Activated T-helper 1 cell treated with anti-CD3 and anti-CD28 coated beads, Interleukin-12 subunit alpha, Interleukin-12 subunit beta, Interleukin-2, Interleukin-4 antibody, amounts not matched to agents 30 ng/mL and 10 ng/mL and 1 ng/mL, durations not matched to agents 14 hours and 24 hours and 36 hours (primary cell): ENCODE measurements at regions of chr3 and their contacts with region 1.

Region 1: GRCh38 chr3:120348981-120349818 is at the start of gene LRRC58:
- DNase-seq: peak; percentile 87
- H3K4me3 Mint-ChIP-seq: peak within 1 kb of the TSS; percentile 92
- H3K27ac Mint-ChIP-seq: peak within 1 kb of the TSS; percentile 88
- H3K4me1 Mint-ChIP-seq: peaks cover 46% of the 10 kb centered on the region
- H3K27me3 Mint-ChIP-seq: peaks cover 26% of the 10 kb centered on the region
- total RNA-seq, gene LRRC58: 26.9 and 27.4 TPM in 2 replicates

Region 2: DNA sequence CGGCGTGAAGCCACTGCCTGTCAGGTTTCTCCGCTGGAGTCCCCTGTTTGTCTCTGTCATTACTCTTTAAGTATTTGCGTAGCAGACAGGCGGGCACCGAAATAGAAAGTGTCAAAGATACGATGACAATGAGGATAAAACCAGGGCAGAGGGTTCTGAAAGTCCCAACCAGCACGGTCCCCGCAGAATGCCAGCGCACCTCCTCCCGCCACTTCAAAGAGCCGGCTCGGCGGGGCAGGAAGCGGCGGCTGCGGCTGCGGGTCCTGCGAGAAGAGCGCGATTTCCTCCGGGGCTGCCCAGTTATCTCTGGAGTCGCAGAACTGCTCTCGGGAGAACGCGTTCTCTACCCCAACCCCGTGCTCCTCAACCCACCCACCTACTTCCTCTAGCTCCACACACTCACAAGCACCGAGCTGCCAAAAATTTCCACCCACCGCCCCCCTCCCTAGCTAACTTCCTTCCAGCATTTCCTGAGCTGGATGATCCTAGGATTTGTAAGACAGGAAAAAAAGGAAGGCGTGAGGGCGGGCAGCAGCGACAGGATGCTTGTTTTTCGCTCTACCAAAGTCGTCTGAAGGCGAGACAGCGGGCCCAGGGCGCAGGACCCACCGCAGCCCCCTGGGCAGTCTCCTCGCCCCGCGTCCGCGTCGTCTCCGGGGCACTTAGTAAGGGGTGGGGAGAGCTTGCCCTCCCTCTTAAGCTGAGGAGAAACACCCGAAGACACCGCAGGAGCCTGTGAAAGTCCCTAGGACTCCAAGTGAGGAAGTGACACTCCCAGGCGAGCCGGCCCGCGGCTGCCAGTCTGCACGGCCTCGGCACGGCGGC is 1055.1 kb before region 1 on chr3 and contains the start of gene ARHGAP31:
- intact Hi-C with region 1: loop called (anchors 5 kb)
- DNase-seq: peak; percentile 82
- H3K4me3 Mint-ChIP-seq: peak within 1 kb of the TSS; percentile 85
- H3K27ac Mint-ChIP-seq: peak within 1 kb of the TSS; percentile 78
- H3K4me1 Mint-ChIP-seq: peaks cover 55% of the 10 kb centered on the region
- H3K27me3 Mint-ChIP-seq: peaks cover 42% of the 10 kb centered on the region
- total RNA-seq, gene ARHGAP31: 7.5 and 8.0 TPM in 2 replicates

Region 3: GRCh38 chr3:119508172-119508845 is 840.9 kb before region 1 on chr3:
- intact Hi-C with region 1: loop called (anchors 5 kb)
- DNase-seq: peak; percentile 31
- H3K4me3 Mint-ChIP-seq: peak overlapping the region; percentile 5
- H3K27ac Mint-ChIP-seq: peak overlapping the region; percentile 89
- H3K4me1 Mint-ChIP-seq: peaks cover 39% of the 10 kb centered on the region
- H3K27me3 Mint-ChIP-seq: no peaks in the 10 kb centered on the region

Region 4: GRCh38 chr3:119891944-119892721 is 457.1 kb before region 1 on chr3:
- intact Hi-C with region 1: loop called (anchors 5 kb)
- DNase-seq: peak; percentile 35
- H3K4me3 Mint-ChIP-seq: no peak overlapping the region
- H3K27ac Mint-ChIP-seq: no peak overlapping the region
- H3K4me1 Mint-ChIP-seq: peaks cover 10% of the 10 kb centered on the region
- H3K27me3 Mint-ChIP-seq: no peaks in the 10 kb centered on the region

Region 5: DNA sequence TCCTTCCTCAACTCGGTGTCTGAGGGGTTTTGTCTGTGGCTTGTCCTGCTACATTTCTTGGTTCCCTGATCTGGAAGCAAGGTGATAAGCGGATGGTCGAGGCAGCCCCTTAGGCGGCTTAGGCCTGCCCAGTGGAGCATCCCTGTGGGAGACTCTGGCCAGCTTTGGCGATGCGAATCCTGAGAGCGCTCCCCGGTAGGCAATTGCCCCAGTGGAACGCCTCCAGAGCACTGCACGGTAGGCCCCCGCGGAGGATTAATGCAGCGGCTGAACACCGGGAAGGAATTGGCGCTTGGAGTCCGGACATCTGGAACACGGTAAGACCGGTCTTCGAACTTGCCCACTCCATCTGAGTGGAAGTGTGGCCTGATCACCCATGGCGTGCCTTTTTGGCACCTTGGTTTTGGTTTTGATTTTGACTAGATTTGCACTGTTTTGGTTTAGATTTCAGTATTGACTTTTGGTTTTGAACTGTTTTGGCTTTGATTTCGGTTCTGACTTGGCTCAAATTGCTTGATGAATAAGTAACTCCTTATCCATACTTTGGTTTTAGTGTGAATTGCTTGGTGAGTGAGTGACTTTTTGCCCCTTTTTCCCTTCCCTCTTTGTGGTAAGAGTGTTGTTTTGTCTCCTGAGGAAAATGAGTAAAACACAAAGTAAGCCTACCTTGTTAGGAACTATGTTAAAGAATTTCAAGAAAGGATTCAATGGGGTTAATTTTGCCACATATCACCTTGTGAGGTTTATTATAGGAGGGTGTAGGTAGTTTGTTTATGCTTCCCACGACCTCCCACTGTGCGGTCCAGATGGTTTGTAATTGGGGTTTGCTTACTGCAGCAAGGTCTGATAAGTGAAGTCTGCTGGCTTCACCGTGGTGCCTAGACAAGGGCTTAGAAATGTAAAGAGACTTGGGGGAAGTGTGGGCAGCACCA is 37.1 kb before region 1 on chr3:
- intact Hi-C with region 1: no loop called
- DNase-seq: no peak
- H3K4me3 Mint-ChIP-seq: no peak overlapping the region
- H3K27ac Mint-ChIP-seq: no peak overlapping the region
- H3K4me1 Mint-ChIP-seq: peaks cover 7% of the 10 kb centered on the region
- H3K27me3 Mint-ChIP-seq: peaks cover 2% of the 10 kb centered on the region

Region 6: DNA sequence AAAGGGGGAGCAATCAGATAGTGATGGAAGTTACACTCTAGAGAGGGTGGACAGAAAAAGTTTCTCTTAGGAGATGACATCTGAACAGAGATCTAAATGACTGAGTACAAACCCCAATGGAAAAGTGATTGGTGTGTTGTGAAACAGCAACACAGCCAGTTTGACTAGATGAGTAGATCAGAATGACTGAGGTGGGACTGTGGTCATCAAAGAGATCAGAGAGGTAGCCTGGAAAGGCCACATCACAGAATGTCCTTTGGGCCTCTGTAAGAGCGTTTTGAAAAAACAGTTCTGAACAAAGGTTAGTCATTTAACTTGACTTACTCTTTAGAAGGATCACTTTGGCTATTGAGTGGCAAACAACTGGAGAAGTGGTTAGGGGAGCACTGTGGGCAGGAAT is 10.7 kb before region 1 on chr3:
- intact Hi-C with region 1: loop called (anchors 1 kb)
- DNase-seq: no peak
- H3K4me3 Mint-ChIP-seq: peak overlapping the region; percentile 11
- H3K27ac Mint-ChIP-seq: peak overlapping the region; percentile 34
- H3K4me1 Mint-ChIP-seq: peaks cover 22% of the 10 kb centered on the region
- H3K27me3 Mint-ChIP-seq: no peaks in the 10 kb centered on the region

Region 7: GRCh38 chr3:120596116-120596852 is 247.1 kb after region 1 on chr3 and contains the start of gene NDUFB4:
- intact Hi-C with region 1: loop called (anchors 2 kb)
- DNase-seq: peak; percentile 94
- H3K4me3 Mint-ChIP-seq: peak within 1 kb of the TSS; percentile 91
- H3K27ac Mint-ChIP-seq: peak within 1 kb of the TSS; percentile 96
- H3K4me1 Mint-ChIP-seq: peaks cover 15% of the 10 kb centered on the region
- H3K27me3 Mint-ChIP-seq: no peaks in the 10 kb centered on the region
- total RNA-seq, gene NDUFB4: 107 and 108 TPM in 2 replicates

Region 8: DNA sequence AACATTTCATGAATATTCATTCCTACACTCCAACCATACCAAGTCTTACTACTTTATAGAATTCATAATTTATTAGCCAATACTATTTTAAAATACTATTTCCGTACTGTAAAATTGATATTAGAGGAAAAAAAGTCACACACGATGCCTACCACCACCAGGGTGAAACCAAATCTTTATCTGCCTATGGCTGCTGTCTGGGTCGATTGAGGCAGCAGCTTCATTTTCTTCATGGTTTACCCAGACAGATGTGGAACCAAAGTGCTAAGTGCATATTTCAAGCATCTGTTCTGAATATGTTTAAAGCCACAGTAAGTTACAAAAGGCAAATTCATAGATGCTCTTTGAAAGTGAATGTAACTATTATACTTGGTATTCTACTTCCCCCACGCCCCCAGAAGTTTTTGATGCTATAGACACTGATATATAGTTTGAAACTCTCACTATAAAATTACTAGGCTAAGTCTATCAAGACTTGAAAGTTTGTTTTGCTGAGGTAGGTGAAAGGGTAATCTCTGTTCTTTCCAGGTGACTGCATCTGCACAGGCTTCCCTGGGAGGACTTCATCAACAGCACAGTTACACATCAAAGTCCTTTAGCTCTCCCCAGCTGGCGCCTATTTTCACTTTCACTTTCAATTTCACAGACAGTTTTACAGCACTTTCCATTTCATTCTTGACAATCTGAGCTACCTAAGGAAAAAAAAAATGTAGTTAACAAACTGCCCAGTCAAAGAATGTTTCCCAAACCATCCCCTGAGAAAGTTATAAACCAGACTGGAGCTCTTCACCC is 1082.7 kb after region 1 on chr3:
- intact Hi-C with region 1: loop called (anchors 10 kb)
- DNase-seq: peak; percentile 59
- H3K4me3 Mint-ChIP-seq: no peak overlapping the region
- H3K27ac Mint-ChIP-seq: peak overlapping the region; percentile 30
- H3K4me1 Mint-ChIP-seq: peaks cover 30% of the 10 kb centered on the region
- H3K27me3 Mint-ChIP-seq: no peaks in the 10 kb centered on the region